ENCODE measurements at regions of chr2 and their contacts with region 1.

Region 1: GRCh38 chr2:200856806-200857205 is 7.7 kb downstream of the CLK1 start:
- DNase-seq: no peak
- ATAC-seq: no peak

Region 2: GRCh38 chr2:200695191-200695590 is 161.6 kb before region 1 on chr2:
- intact Hi-C with region 1: no loop called
- DNase-seq: peak; percentile 67
- ATAC-seq: peak; percentile 93

Region 3: GRCh38 chr2:200820573-200821234 is 36.1 kb before region 1 on chr2:
- intact Hi-C with region 1: loop called (anchors 2 kb)
- DNase-seq: no peak
- ATAC-seq: no peak

Region 4: DNA sequence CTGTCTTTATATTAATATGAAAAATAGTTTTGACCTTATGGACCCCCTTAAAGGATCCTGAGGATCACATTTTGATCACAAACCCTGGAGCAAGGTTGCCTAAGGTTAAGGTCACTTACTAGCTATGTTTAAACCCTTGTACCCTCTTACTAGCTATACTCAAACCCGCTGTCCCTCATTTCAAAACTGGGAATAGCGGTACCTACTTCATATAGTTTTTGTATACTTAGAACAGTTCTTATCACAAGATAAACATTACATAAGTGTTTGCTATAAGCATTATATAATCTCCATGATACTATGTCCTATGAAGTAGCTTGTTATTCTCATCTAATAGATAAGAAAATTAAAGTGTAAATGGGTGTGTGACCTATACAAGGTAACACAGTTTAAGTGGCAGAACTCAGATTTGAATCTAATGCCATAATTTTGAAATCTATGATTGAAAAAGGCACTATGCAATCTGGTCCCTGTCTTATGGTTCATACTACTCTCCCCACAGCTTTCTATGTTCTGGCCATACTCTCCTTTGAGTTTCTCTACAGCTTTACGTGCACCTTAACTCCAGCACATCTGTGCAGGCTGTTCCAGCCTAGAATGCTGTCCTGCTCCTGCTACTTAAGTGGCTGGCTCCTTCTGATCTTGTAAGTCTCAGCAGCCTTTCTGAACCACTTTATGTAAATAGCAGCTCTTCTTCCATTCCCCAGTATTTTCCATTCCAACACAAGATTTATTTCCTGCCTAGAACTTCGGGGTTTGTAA is 184.2 kb after region 1 on chr2:
- intact Hi-C with region 1: no loop called
- DNase-seq: no peak
- ATAC-seq: no peak

Region 5: DNA sequence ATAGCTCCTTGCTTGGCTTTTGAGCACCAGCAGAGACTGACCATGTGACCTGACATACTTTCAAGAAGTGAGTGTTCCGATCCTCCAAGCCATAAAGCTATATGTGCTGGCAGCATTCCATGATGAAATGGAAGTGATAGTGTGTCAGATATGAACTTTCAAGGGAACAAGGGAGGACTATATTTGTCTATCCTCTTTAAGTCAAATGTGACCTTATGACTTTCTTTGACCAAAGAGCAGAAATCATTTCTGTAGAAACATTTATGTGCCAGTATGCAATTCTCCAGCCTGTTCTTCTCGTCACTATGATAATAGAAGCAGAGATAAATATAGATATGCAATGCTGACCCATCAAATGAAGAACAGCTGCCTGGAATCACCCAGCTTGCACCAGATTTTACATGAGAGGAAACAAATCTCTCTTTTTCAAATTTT is 200.3 kb after region 1 on chr2:
- intact Hi-C with region 1: no loop called
- DNase-seq: no peak
- ATAC-seq: peak; percentile 17